PC-3 (cell line): ENCODE measurements at regions of chr17 and their contacts with region 1.

Region 1: DNA sequence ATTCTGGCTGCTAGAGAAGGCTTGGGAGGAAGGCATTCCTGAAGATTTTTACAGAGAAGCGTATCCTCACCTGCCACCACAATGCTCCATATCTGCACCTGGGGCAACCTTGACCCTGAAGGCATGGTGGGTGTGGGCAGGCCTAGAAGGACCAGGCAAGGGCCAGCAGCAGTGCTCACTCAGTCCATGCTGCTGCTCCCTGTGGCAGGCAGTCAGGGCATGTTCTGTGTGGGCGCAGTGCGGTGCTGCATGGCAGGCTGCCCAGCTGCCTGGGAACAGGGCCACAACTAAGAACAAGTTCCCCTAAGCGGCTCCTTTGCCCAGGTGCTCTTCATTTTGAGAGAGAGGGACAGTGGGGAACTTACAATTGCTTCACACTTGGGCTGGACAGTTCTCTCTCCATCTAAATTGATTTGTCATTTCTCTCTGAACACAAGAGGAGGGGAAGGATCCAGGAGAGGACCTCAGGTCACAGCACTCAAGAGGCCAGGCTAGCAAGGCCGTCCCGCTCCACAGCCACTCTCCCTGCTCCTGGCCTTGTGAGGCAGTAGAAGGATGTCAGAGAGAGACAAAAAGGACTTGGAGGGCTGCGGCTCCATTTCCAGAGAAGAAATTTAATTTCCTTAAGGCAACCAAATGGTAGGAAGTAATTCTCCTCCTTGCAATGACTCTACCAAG is 158.8 kb downstream of the AATF start:
- DNase-seq: no peak
- ATAC-seq: no peak
- H3K4me3 ChIP-seq: no peak overlapping the region
- H3K27ac ChIP-seq: no peak overlapping the region
- H3K4me1 ChIP-seq: no peaks in the 10 kb centered on the region
- H3K27me3 ChIP-seq: no peaks in the 10 kb centered on the region
- CTCF ChIP-seq: no peak

Region 2: DNA sequence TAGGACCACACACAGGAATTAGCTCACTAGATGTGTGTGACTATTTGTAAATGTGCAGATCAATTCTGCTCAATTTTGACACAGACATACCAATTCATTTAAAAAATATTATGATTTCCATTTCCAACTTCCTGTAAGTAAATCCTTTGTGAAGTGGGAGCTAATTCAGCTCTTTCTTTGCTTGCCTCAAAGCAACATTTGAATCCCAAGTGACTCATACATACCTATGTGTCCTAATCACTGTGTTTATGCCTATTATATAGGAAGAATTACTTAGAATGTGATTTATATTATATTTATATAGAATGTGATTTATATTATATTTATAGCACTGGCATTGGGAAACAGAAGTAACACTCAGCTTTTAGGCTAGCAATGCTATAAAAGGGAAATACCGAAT is 72.3 kb after region 1 on chr17:
- CTCF ChIA-PET with region 1: interaction called, 4 read pairs
- POLR2A ChIA-PET with region 1: no interaction called
- intact Hi-C with region 1: loop called (anchors 5 kb)
- DNase-seq: peak; percentile 74
- ATAC-seq: peak; percentile 88
- H3K4me3 ChIP-seq: no peak overlapping the region
- H3K27ac ChIP-seq: peak overlapping the region; percentile 71
- H3K4me1 ChIP-seq: peaks cover 33% of the 10 kb centered on the region
- H3K27me3 ChIP-seq: no peaks in the 10 kb centered on the region
- CTCF ChIP-seq: no peak